ENCODE measurements at regions of chr20 and their contacts with region 1.

Region 1: DNA sequence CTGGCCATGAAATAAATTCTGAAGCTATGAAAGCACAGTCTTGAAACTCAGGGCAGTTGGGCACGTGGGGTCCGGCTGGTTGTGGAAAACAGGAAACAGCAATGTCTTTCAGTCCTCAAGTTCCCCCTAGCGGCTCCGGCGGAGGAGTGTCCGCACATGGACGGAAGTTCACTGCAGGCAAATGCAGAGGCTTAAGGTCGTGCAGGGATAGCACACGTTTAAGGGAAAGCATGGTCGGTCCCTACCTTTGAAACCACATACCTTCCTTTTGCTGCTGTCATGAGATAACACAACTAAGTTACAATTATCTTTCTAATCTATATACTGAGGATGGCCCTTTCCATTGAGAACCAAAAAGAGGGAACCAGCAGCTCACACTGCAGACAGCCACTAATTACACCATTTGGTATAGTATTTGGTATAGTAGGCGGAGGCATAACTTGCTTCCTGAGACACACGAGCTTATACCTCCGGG is 52.6 kb upstream of the NFATC2 start:
- DNase-seq: peak; percentile 92
- H3K4me3 ChIP-seq: no peak overlapping the region
- H3K27ac ChIP-seq: no peak overlapping the region
- H3K4me1 ChIP-seq: peaks cover 13% of the 10 kb centered on the region
- H3K27me3 ChIP-seq: no peaks in the 10 kb centered on the region
- CTCF ChIP-seq: peak; percentile 93

Region 2: GRCh38 chr20:51385646-51386530 is 209.2 kb before region 1 on chr20:
- CTCF ChIA-PET with region 1: interaction called, 31 read pairs
- POLR2A ChIA-PET with region 1: no interaction called
- intact Hi-C with region 1: loop called (anchors 2 kb)
- DNase-seq: peak; percentile 57
- H3K4me3 ChIP-seq: no peak overlapping the region
- H3K27ac ChIP-seq: no peak overlapping the region
- H3K4me1 ChIP-seq: peaks cover 7% of the 10 kb centered on the region
- H3K27me3 ChIP-seq: no peaks in the 10 kb centered on the region
- CTCF ChIP-seq: peak; percentile 64

Region 3: GRCh38 chr20:51412333-51412871 is 182.7 kb before region 1 on chr20:
- CTCF ChIA-PET with region 1: interaction called, 20 read pairs
- POLR2A ChIA-PET with region 1: no interaction called
- intact Hi-C with region 1: loop called (anchors 10 kb)
- DNase-seq: peak; percentile 54
- H3K4me3 ChIP-seq: no peak overlapping the region
- H3K27ac ChIP-seq: peak overlapping the region; percentile 43
- H3K4me1 ChIP-seq: peaks cover 14% of the 10 kb centered on the region
- H3K27me3 ChIP-seq: no peaks in the 10 kb centered on the region
- CTCF ChIP-seq: no peak

Region 4: GRCh38 chr20:51687062-51687461 is 92.0 kb after region 1 on chr20:
- CTCF ChIA-PET with region 1: no interaction called
- POLR2A ChIA-PET with region 1: no interaction called
- intact Hi-C with region 1: no loop called
- DNase-seq: no peak
- H3K4me3 ChIP-seq: no peak overlapping the region
- H3K27ac ChIP-seq: no peak overlapping the region
- H3K4me1 ChIP-seq: no peaks in the 10 kb centered on the region
- H3K27me3 ChIP-seq: no peaks in the 10 kb centered on the region
- CTCF ChIP-seq: no peak

Region 5: GRCh38 chr20:52200870-52201269 is 605.8 kb after region 1 on chr20:
- CTCF ChIA-PET with region 1: no interaction called
- POLR2A ChIA-PET with region 1: interaction called, 10 read pairs
- intact Hi-C with region 1: no loop called
- DNase-seq: no peak
- H3K4me3 ChIP-seq: no peak overlapping the region
- H3K27ac ChIP-seq: no peak overlapping the region
- H3K4me1 ChIP-seq: no peaks in the 10 kb centered on the region
- H3K27me3 ChIP-seq: no peaks in the 10 kb centered on the region
- CTCF ChIP-seq: no peak